Thyroid gland (tissue), 4 donors: ENCODE measurements at regions of chr4 and their contacts with region 1.

Region 1: GRCh38 chr4:17324386-17324830 is 187.5 kb downstream of the QDPR start:
- DNase-seq: peak; percentile 28 to 40
- H3K4me3 ChIP-seq: no peak overlapping the region
- H3K27ac ChIP-seq: no peak overlapping the region
- H3K4me1 ChIP-seq: peaks cover 6 to 8% of the 10 kb centered on the region in 2 donors
- H3K27me3 ChIP-seq: no peaks in the 10 kb centered on the region
- CTCF ChIP-seq: peak in 5 of 6 experiments; percentile 38 to 77 (median 54)
- POLR2A ChIP-seq: no peak

Region 2: GRCh38 chr4:16916719-16917337 is 407.6 kb before region 1 on chr4:
- intact Hi-C with region 1: loop called (anchors 10 kb)
- DNase-seq: peak; percentile 6 to 34
- H3K4me3 ChIP-seq: no peak overlapping the region
- H3K27ac ChIP-seq: no peak overlapping the region
- H3K4me1 ChIP-seq: no peaks in the 10 kb centered on the region
- H3K27me3 ChIP-seq: no peaks in the 10 kb centered on the region
- CTCF ChIP-seq: peak in 4 of 6 experiments; percentile 18 to 58 (median 57)
- POLR2A ChIP-seq: no peak

Region 3: DNA sequence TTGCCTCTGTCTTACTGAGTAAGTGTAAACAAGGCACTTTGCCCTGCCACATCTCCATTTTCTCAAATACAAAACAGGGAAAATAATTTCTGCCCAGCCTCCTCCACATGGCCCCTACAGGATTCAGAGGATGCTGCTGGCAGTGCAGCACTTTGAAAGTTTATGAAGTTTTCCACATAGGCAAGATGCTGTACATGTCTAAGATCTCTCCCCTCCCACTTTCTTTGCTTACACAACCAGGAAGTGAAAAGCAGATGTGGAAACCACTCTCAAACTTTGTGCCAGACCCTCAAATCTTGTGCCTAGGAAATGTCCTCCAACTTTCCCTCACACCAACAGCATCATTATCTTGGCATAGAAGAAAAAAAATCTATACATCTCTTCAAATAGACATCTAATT is 168.9 kb before region 1 on chr4:
- intact Hi-C with region 1: no loop called
- DNase-seq: no peak
- H3K4me3 ChIP-seq: no peak overlapping the region
- H3K27ac ChIP-seq: no peak overlapping the region
- H3K4me1 ChIP-seq: no peaks in the 10 kb centered on the region
- H3K27me3 ChIP-seq: no peaks in the 10 kb centered on the region
- CTCF ChIP-seq: no peak
- POLR2A ChIP-seq: no peak

Region 4: GRCh38 chr4:17218786-17219185 is 105.6 kb before region 1 on chr4:
- intact Hi-C with region 1: no loop called
- DNase-seq: no peak
- H3K4me3 ChIP-seq: no peak overlapping the region
- H3K27ac ChIP-seq: no peak overlapping the region
- H3K4me1 ChIP-seq: peaks cover 12 to 18% of the 10 kb centered on the region in 2 donors
- H3K27me3 ChIP-seq: no peaks in the 10 kb centered on the region
- CTCF ChIP-seq: no peak
- POLR2A ChIP-seq: no peak

Region 5: DNA sequence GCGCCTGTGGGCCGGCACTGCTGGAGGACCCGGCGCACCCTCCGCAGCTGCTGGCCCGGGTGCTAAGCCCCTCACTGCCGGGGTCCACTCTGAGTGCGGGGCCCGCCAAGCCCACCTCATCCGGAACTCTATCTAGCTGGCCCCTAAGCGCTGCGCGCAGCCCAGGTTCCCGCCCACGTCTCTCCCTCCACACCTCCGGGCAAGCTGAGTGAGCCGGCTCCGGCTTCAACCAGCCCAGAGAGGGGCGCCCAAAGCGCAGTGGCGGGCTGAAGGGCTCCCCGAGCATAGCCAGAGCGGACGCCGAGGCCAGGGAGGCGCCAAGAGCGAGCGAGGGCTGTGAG is 112.3 kb after region 1 on chr4:
- intact Hi-C with region 1: no loop called
- DNase-seq: no peak
- H3K4me3 ChIP-seq: no peak overlapping the region
- H3K27ac ChIP-seq: no peak overlapping the region
- H3K4me1 ChIP-seq: no peaks in the 10 kb centered on the region
- H3K27me3 ChIP-seq: no peaks in the 10 kb centered on the region
- CTCF ChIP-seq: no peak
- POLR2A ChIP-seq: no peak